ENCODE measurements at regions of chr3 and their contacts with region 1.

Region 1: DNA sequence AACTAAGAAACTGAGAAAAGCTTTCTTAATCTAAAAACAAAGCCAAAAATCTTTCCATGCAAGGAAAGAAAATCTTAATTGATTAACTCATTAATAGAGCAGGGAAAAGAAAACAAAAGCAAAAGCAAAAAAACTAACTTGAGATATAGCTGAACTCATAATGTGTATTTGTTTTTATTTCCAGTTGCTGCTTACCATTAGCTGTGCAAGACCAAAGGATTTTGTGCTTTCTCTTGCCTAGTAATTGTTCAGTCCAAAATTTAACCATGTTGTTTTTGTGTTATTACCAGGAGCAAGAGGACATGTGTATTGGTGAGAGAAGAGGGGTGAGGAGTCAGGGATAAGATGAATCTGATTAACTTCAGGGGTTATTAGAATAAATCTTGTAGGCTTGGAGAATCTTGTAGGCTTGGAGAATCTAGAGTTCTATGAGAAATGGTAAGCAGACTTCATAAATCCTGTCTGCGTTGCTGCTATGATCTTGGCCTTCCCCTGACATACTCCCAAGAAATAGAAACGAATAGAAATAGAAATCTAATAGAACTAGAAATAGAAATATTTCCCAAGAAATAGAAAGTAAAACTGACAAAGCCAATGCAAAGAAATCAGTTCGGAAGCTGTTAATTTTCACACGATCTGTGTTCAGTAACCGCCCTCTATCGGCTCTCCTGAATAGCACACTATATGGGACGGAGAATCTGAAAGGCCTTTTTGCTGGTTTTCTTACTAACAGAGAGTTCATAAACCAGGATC is 72.6 kb upstream of the TNFSF10 start:
- DNase-seq: peak; percentile 51
- H3K4me3 Mint-ChIP-seq: peak overlapping the region; percentile 72
- H3K27ac Mint-ChIP-seq: peak overlapping the region; percentile 76
- H3K4me1 Mint-ChIP-seq: peaks cover 60% of the 10 kb centered on the region
- H3K27me3 Mint-ChIP-seq: no peaks in the 10 kb centered on the region

Region 2: DNA sequence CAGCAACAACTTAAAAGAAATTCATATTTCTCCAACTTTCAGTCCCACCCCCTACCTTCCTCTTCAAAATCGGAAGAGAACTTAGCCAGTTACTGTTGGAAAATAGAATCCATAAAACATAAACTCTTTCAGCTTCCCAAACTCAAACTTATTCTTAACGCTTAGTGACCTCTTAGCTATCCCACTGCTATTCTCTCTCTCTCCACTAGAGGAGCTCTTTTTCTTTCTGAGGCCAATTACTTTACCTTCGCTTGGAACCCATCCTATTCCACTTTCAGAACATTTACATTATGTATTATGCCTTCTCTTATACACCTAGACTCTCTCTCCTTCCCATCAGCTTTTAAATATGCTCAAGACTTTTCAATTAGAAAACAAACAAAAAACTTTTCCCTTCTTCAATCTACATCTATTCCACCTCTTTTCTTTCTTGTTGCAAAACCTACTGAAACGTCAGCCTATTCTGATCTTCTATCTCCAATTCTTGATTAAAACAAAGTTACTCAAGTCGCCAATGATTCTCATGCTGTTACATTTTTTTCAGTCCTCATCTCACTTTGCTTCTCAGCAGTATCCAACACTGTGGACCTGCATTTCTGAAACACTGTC is 134.2 kb before region 1 on chr3:
- CTCF ChIA-PET with region 1: interaction called, 33 read pairs
- POLR2A ChIA-PET with region 1: interaction called, 3 read pairs
- DNase-seq: no peak
- H3K4me3 Mint-ChIP-seq: no peak overlapping the region
- H3K27ac Mint-ChIP-seq: no peak overlapping the region
- H3K4me1 Mint-ChIP-seq: peaks cover 4% of the 10 kb centered on the region
- H3K27me3 Mint-ChIP-seq: peaks cover 4% of the 10 kb centered on the region

Region 3: GRCh38 chr3:172511783-172512762 is 83.7 kb before region 1 on chr3:
- CTCF ChIA-PET with region 1: interaction called, 98 read pairs
- POLR2A ChIA-PET with region 1: interaction called, 38 read pairs
- DNase-seq: peak; percentile 79
- H3K4me3 Mint-ChIP-seq: peak overlapping the region; percentile 52
- H3K27ac Mint-ChIP-seq: peak overlapping the region; percentile 87
- H3K4me1 Mint-ChIP-seq: peaks cover 83% of the 10 kb centered on the region
- H3K27me3 Mint-ChIP-seq: no peaks in the 10 kb centered on the region

Region 4: GRCh38 chr3:172550347-172550943 is 45.4 kb before region 1 on chr3:
- CTCF ChIA-PET with region 1: interaction called, 10 read pairs
- POLR2A ChIA-PET with region 1: no interaction called
- DNase-seq: peak; percentile 81
- H3K4me3 Mint-ChIP-seq: peak overlapping the region; percentile 18
- H3K27ac Mint-ChIP-seq: peak overlapping the region; percentile 51
- H3K4me1 Mint-ChIP-seq: peaks cover 44% of the 10 kb centered on the region
- H3K27me3 Mint-ChIP-seq: no peaks in the 10 kb centered on the region

Region 5: DNA sequence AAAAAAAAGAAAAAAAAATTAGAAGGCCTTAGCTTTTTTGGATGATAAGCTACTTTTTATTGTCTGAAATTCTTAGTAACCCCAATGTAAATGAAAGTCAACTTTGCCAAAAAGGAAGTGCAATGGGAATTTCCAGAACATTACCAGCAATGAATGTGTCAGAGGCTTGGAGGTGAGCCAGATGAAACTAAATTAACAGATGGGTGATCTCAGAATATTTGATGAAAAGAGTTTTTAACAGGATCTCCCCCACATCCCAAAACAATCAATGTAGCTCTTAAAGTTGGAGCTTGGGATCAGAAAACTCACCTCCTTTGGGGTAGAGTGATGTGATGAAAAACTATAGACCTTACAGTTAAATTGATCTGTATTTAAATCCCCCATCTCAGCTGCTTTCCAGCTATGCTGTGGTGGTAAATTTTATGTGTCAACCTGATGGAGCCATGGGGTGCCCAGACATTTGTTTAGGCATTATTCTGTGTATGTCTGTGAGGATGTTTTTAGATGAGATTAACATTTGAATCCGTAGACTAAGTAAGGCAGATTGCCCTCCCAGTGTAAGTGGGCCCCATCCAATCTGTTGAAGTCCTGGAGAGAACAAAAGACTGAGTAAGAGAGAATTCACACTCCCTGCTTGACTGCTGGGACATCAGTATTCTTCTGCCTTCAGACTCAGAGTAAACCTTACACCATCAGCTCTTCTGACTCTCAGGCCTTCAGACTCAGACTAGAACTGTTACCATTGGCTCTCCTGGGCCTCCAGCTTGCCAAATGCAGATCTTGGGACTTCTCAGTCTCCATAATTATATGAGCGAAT is 11.7 kb after region 1 on chr3:
- CTCF ChIA-PET with region 1: interaction called, 16 read pairs
- POLR2A ChIA-PET with region 1: interaction called, 4 read pairs
- DNase-seq: no peak
- H3K4me3 Mint-ChIP-seq: no peak overlapping the region
- H3K27ac Mint-ChIP-seq: no peak overlapping the region
- H3K4me1 Mint-ChIP-seq: peaks cover 3% of the 10 kb centered on the region
- H3K27me3 Mint-ChIP-seq: no peaks in the 10 kb centered on the region

Region 6: GRCh38 chr3:172776049-172776717 is 180.4 kb after region 1 on chr3:
- CTCF ChIA-PET with region 1: no interaction called
- POLR2A ChIA-PET with region 1: no interaction called
- DNase-seq: no peak
- H3K4me3 Mint-ChIP-seq: no peak overlapping the region
- H3K27ac Mint-ChIP-seq: no peak overlapping the region
- H3K4me1 Mint-ChIP-seq: peaks cover 17% of the 10 kb centered on the region
- H3K27me3 Mint-ChIP-seq: no peaks in the 10 kb centered on the region